ENCODE measurements at regions of chr1 and their contacts with region 1.

Region 1: DNA sequence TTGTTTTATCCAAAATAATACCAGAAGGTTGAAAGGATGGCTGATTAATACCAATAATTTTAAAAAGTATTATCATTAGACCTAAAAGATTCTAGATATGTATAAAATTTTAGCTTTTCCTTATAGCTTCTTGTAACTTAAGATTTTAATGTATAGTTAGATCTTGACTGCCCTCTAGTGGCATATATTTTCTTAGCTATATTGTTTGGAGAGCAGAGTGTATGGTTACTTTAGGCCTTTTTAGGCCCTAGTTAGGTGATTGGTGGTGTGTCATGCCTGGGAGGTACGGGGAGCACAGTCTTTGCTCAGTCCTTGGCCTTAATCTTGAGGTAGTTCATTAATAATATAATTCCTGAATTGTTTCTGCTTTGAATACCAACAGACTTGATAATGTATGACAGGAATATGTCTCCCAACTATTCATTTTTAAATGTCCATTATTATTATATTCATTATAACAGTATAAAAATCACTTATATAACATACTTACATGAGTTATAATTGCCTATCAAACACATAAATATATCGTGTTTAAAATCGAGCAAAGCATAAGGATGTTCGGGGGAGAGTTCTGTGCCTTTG is 328.4 kb downstream of the ZP4 start:
- DNase-seq: no peak
- H3K4me3 ChIP-seq: no peak overlapping the region
- H3K27ac ChIP-seq: no peak overlapping the region
- H3K4me1 ChIP-seq: no peaks in the 10 kb centered on the region
- H3K27me3 ChIP-seq: no peaks in the 10 kb centered on the region
- CTCF ChIP-seq: peak; percentile 56

Region 2: DNA sequence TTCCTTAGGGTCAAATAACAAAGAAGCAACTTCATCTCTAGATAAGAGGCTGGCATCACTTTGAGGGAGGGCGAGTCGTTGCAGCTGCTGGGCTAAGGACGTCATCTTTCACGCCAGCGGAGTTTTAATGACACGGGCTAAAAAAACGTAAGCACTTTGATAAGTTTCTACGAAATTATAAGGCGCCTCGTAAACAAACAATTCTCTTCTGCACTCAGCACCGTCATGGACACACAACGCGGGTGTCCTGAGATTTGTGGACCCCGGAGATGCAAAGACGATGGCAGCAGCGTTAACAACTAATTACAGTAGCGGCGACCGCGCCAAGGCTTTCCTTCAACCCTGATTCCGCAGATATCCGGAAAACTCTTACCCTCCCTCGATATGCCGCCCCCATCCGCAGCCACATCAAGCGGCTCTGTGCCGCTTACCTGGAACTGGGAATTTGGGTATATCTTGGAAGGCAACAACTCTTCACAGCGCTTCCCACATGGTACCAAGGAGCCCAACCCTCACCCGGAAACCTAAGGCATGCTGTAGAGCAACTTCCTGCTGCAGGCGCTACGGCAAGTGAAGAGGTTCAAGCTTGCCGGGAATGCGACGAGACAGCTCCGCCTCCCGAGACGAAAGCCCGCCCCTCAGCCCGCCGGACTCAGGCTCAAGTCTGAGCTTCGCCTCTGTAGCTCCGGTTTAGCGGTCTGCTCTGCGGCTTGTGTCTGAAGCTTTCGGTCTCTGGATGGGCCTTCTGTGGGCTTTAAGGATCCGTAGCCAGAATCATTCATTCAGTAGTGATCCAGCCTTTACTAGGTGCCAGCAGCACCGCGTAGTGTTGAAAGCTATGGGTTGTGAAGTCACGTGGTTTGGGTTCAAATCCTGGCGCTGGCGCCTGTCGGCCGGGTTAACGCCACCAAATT is 958.1 kb before region 1 on chr1 and contains the start of gene HEATR1:
- intact Hi-C with region 1: loop called (anchors 5 kb)
- DNase-seq: peak; percentile 94
- H3K4me3 ChIP-seq: peak within 1 kb of the TSS; percentile 71
- H3K27ac ChIP-seq: peak within 1 kb of the TSS; percentile 58
- H3K4me1 ChIP-seq: peaks cover 5% of the 10 kb centered on the region
- H3K27me3 ChIP-seq: no peaks in the 10 kb centered on the region
- CTCF ChIP-seq: no peak
- total RNA-seq, gene HEATR1: 15.3 to 26.6 TPM

Region 3: GRCh38 chr1:237684236-237684635 is 121.9 kb after region 1 on chr1:
- intact Hi-C with region 1: no loop called
- DNase-seq: no peak
- H3K4me3 ChIP-seq: no peak overlapping the region
- H3K27ac ChIP-seq: no peak overlapping the region
- H3K4me1 ChIP-seq: no peaks in the 10 kb centered on the region
- H3K27me3 ChIP-seq: no peaks in the 10 kb centered on the region
- CTCF ChIP-seq: no peak

Measured in colonic mucosa (tissue), 4 donors.